ENCODE measurements at regions of chr6 and their contacts with region 1.

Region 1: GRCh38 chr6:14876778-14877613 is 368.9 kb upstream of the JARID2 start:
- DNase-seq: peak; percentile 48
- H3K4me3 Mint-ChIP-seq: peak overlapping the region; percentile 68
- H3K27ac Mint-ChIP-seq: peak overlapping the region; percentile 98
- H3K4me1 Mint-ChIP-seq: peaks cover 75% of the 10 kb centered on the region
- H3K27me3 Mint-ChIP-seq: no peaks in the 10 kb centered on the region

Region 2: DNA sequence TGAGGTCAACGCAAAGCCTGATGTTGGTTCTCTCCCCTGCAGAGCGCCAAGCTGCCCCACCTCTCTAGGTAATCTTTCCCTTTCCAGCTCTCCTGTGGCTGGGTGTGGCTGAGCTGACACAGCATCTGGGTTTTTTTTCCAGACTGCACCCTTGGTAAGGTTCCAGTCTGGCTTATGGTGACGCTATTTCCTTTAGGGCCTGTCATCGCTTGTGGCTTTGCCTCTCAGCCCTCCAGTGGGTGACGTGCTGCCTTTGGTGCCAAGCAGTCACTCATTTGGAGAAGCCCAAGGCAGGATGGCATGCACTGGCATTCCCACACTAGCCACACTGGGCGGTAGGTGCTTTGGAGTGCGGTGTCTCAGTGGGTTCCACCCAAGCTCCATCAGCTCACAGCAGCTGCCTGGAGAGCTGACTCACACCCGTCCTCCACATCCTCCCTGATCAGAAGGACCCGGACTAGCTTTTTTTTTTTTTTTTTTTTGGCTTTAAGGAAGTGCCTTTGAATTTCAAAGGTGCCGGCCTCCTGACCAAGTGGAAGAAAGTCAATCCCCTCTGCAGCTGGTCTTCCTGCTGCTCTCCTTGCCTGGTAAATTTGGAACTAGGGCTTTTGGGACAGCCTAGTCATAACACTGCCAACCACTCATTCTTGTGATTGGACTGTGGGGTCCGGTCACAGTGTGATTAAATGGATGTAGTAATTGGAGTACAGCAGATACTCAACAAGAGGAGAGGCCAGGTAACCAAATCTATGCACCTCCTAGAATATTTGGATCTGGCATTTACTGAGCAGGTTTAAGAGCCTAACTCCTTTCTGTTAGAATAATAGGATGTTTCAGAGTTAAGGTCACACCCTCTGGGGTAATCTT is 605.8 kb before region 1 on chr6:
- intact Hi-C with region 1: loop called (anchors 5 kb)
- DNase-seq: peak; percentile 66
- H3K4me3 Mint-ChIP-seq: peak overlapping the region; percentile 62
- H3K27ac Mint-ChIP-seq: peak overlapping the region; percentile 90
- H3K4me1 Mint-ChIP-seq: peaks cover 40% of the 10 kb centered on the region
- H3K27me3 Mint-ChIP-seq: no peaks in the 10 kb centered on the region

Region 3: GRCh38 chr6:14665827-14666724 is 210.9 kb before region 1 on chr6:
- intact Hi-C with region 1: loop called (anchors 1 kb)
- DNase-seq: no peak
- H3K4me3 Mint-ChIP-seq: no peak overlapping the region
- H3K27ac Mint-ChIP-seq: no peak overlapping the region
- H3K4me1 Mint-ChIP-seq: peaks cover 28% of the 10 kb centered on the region
- H3K27me3 Mint-ChIP-seq: peaks cover 32% of the 10 kb centered on the region

Region 4: GRCh38 chr6:15023448-15023847 is 146.5 kb after region 1 on chr6:
- intact Hi-C with region 1: loop called (anchors 1 kb)
- DNase-seq: peak; percentile 48
- H3K4me3 Mint-ChIP-seq: peak overlapping the region; percentile 31
- H3K27ac Mint-ChIP-seq: peak overlapping the region; percentile 94
- H3K4me1 Mint-ChIP-seq: peaks cover 53% of the 10 kb centered on the region
- H3K27me3 Mint-ChIP-seq: no peaks in the 10 kb centered on the region

Region 5: GRCh38 chr6:15254070-15254841 is 377.3 kb after region 1 on chr6:
- intact Hi-C with region 1: loop called (anchors 1 kb)
- DNase-seq: no peak
- H3K4me3 Mint-ChIP-seq: peak overlapping the region; percentile 41
- H3K27ac Mint-ChIP-seq: peak overlapping the region; percentile 92
- H3K4me1 Mint-ChIP-seq: peaks cover 98% of the 10 kb centered on the region
- H3K27me3 Mint-ChIP-seq: no peaks in the 10 kb centered on the region

Region 6: GRCh38 chr6:15340775-15341174 is 463.8 kb after region 1 on chr6:
- intact Hi-C with region 1: no loop called
- DNase-seq: no peak
- H3K4me3 Mint-ChIP-seq: peak overlapping the region; percentile 24
- H3K27ac Mint-ChIP-seq: peak overlapping the region; percentile 69
- H3K4me1 Mint-ChIP-seq: peaks cover 83% of the 10 kb centered on the region
- H3K27me3 Mint-ChIP-seq: no peaks in the 10 kb centered on the region

Region 7: DNA sequence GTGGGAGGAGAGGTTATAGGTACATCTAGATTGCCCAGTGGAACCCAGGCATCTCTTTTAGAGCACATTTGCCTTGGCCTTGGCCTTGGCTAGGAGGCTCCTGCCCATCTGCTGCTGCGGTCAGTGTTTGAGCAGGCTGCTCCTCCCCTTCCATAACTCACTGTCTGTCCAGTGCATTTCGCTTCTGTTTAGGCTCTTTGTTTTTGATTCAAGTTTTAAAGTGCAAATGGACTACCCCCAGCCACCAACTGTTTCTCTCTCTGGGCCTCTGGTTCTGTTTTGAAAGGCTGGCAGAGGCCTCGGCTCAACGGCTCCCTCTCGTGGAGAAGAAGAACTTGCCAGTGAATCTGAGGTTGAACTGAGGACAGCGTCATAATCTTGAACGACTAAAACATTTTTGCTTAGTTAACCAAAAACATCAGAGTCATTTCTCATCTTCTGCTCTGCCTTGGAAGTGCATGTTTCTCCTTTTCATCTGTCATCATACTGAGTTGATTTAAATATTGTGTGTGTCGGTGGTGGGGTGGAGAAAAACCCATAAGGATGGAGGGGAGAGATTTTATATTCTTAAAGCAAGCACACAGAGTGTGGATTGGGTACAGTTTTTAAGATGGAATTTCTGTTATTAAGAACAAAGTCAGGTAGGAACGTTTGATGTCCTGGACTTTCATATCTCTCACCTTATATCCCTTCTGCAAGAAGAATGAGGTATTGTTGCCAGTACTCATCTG is 614.4 kb after region 1 on chr6:
- intact Hi-C with region 1: loop called (anchors 1 kb)
- DNase-seq: peak; percentile 55
- H3K4me3 Mint-ChIP-seq: no peak overlapping the region
- H3K27ac Mint-ChIP-seq: peak overlapping the region; percentile 77
- H3K4me1 Mint-ChIP-seq: peaks cover 31% of the 10 kb centered on the region
- H3K27me3 Mint-ChIP-seq: peaks cover 1% of the 10 kb centered on the region